Natural killer cell (primary cell): ENCODE measurements at regions of chr16 and their contacts with region 1.

Region 1: GRCh38 chr16:89171463-89172170 is at the start of gene CDH15:
- DNase-seq: peak; percentile 77 to 97
- ATAC-seq: peak; percentile 93 to 97 (median 95)
- H3K4me3 ChIP-seq: peak within 1 kb of the TSS; percentile 18
- H3K4me3 Mint-ChIP-seq: peak within 1 kb of the TSS; percentile 75
- H3K27ac ChIP-seq: no peak within 1 kb of the TSS
- H3K27ac Mint-ChIP-seq: peak within 1 kb of the TSS in 1 of 2 donors; percentile 84
- H3K4me1 ChIP-seq: peaks cover 42% of the 10 kb centered on the region
- H3K4me1 Mint-ChIP-seq: peaks cover 7 to 8% of the 10 kb centered on the region in 2 donors
- H3K27me3 ChIP-seq: peaks cover 12% of the 10 kb centered on the region
- H3K27me3 Mint-ChIP-seq: peaks cover 0 to 4% of the 10 kb centered on the region in 2 donors
- CTCF ChIP-seq: no peak
- total RNA-seq, gene CDH15: 0.20 TPM in 1 of 3 donors, not detected in the others

Region 2: DNA sequence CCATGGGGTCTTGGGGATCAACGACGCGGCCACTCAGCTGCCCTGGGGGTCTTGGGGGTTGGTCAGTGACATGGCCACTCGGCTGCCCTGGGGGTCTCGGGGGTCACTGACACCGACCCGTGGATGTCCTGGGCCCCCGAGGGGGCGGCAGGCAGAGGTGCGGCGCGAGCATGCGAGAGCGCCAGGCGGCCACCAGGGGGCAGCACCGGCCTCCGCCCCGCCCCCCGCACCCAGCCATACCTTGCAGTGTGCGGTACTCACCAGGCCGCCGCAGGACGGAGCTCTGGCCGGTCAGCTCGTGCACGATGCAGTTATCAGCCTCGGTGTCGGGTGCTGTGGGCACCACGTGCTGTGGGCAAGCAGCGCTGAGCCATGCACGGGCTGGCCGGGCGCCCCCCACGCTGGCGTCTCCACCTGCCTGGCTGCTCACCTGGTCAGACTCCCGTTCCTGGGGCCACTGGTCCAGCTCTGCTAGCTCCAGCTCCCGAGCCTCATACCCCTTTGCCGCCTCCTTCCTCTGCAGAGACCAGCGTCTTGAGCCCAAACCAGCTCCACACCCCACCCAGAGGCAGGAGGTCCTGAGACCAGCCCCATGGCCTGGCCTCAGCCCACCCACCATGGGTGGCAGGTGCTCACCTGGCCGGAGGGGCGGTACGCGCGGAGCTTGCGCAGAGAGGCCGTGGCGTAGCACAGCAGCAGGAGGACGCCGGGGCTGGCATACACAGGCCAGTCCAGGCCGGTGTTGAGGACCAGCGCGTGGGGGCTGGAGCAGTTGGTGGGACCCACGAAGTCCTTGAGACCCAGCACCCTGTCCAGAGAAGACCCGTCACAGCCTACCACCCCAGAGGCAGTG is 434.1 kb before region 1 on chr16:
- intact Hi-C with region 1: loop called (anchors 1 kb)
- DNase-seq: peak; percentile 75 to 85
- ATAC-seq: peak; percentile 85 to 99 (median 90)
- H3K4me3 ChIP-seq: no peak overlapping the region
- H3K4me3 Mint-ChIP-seq: no peak overlapping the region
- H3K27ac ChIP-seq: no peak overlapping the region
- H3K27ac Mint-ChIP-seq: no peak overlapping the region
- H3K4me1 ChIP-seq: peaks cover 12% of the 10 kb centered on the region
- H3K4me1 Mint-ChIP-seq: peaks cover 0 to 5% of the 10 kb centered on the region in 2 donors
- H3K27me3 ChIP-seq: no peaks in the 10 kb centered on the region
- H3K27me3 Mint-ChIP-seq: no peaks in the 10 kb centered on the region
- CTCF ChIP-seq: peak; percentile 98

Region 3: DNA sequence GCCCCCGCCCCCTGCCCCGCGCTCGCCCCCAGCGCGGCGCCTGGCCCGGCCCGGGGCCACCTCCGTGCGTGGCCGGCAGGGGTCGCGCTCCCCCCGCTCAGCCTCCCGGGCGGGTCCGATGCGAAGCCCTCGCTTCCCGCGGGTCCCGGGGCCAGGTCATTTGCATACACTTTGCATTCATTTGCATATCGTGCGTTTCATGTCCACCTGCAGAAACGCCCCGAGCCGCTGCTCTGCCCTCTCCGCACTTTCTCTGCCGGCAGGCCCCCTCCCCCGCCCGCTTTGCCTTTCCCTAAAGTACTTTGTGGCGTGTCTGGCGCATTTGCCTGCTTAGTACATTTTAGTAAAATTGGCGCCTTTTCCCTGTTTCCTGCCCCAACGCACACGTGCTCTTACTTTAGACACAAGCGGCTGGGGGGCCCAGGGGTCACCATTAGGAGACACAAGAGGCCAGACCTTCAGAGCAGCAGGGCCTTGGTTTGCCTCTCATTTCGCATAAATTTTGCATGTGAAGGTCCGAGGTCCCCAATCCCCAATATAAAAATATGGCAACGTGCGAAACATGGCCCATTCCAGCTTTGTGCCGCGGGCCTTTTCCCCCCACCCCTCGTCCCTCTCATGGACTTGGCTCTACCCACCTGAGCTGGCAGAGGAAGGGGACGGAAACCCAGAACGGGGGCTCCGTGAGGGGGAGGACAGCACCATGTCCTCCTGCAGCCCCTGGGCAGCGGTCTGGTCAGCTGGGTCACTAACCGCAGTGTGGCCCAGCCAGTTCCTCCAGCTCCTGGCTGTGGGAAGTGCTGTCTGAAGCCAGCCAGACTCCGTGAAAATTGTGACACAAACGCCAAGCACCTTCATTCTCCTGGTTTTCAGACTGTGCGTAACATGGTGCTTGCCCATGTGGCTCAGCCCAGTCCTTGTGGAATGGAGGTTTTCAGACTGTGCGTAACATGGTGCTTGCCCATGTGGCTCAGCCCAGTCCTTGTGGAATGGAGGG is 229.4 kb before region 1 on chr16:
- intact Hi-C with region 1: loop called (anchors 5 kb)
- DNase-seq: peak; percentile 50 to 74
- ATAC-seq: peak; percentile 69 to 84 (median 73)
- H3K4me3 ChIP-seq: no peak overlapping the region
- H3K4me3 Mint-ChIP-seq: peak overlapping the region; percentile 31
- H3K27ac ChIP-seq: no peak overlapping the region
- H3K27ac Mint-ChIP-seq: no peak overlapping the region
- H3K4me1 ChIP-seq: peaks cover 49% of the 10 kb centered on the region
- H3K4me1 Mint-ChIP-seq: peaks cover 0 to 6% of the 10 kb centered on the region in 2 donors
- H3K27me3 ChIP-seq: peaks cover 17% of the 10 kb centered on the region
- H3K27me3 Mint-ChIP-seq: peaks cover 25 to 35% of the 10 kb centered on the region in 2 donors
- CTCF ChIP-seq: peak; percentile 72

Region 4: GRCh38 chr16:89193021-89193575 is 21.5 kb after region 1 on chr16:
- intact Hi-C with region 1: loop called (anchors 2 kb)
- DNase-seq: no peak
- ATAC-seq: peak in 1 of 3 donors; percentile 57
- H3K4me3 ChIP-seq: no peak overlapping the region
- H3K4me3 Mint-ChIP-seq: peak overlapping the region; percentile 37
- H3K27ac ChIP-seq: no peak overlapping the region
- H3K27ac Mint-ChIP-seq: peak overlapping the region in 1 of 2 donors; percentile 47
- H3K4me1 ChIP-seq: peaks cover 10% of the 10 kb centered on the region
- H3K4me1 Mint-ChIP-seq: peaks cover 0 to 6% of the 10 kb centered on the region in 2 donors
- H3K27me3 ChIP-seq: no peaks in the 10 kb centered on the region
- H3K27me3 Mint-ChIP-seq: no peaks in the 10 kb centered on the region
- CTCF ChIP-seq: no peak